Mammary epithelial cell (primary cell): ENCODE measurements at regions of chr9 and their contacts with region 1.

Region 1: DNA sequence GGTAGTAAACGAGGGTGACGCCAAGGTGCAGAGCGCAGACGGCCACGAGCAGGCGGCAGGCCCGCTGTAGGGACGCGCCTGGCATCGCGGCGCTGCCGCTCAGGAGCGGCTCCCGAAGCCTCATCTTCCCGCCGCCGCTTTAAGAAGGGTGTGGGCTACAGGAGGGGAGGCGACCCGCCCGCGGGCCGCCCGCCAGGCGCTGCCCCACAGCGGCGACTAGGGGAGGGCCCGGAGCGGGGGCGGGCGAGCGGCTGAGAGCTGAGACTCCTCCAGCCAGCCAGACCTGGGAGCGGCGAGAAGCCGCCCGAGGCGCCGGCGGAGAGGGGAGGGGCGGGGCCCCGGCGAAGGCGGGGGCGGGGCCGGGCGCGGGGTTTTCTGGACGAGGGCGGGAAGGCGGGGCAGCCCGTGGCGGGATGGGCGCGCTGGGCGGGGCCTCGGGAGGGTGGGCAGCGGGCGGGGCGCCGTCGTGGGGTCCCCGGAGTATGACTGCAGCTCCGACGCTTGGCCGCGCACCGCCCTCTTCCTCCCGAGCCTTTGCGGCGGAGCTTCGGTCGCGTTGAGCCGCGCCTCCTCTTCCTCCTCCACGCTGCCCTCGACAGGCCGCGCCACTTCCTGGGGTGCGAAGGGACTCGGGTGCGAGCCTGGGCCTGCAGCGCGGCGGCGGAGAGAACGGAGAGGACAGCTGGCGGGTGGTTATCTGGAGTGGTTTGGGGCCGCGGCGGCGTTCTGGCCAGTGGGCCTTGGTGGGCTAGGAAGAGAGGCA is at the start of gene B4GALT1:
- DNase-seq: peak; percentile 95
- H3K4me3 ChIP-seq: peak within 1 kb of the TSS; percentile 73 to 86 (median 81)
- H3K27ac ChIP-seq: peak within 1 kb of the TSS; percentile 96
- H3K4me1 ChIP-seq: peaks cover 49% of the 10 kb centered on the region
- H3K27me3 ChIP-seq: no peaks in the 10 kb centered on the region
- CTCF ChIP-seq: peak in 1 of 2 donors; percentile 13
- total RNA-seq, gene B4GALT1: 82.2 to 135 TPM

Region 2: DNA sequence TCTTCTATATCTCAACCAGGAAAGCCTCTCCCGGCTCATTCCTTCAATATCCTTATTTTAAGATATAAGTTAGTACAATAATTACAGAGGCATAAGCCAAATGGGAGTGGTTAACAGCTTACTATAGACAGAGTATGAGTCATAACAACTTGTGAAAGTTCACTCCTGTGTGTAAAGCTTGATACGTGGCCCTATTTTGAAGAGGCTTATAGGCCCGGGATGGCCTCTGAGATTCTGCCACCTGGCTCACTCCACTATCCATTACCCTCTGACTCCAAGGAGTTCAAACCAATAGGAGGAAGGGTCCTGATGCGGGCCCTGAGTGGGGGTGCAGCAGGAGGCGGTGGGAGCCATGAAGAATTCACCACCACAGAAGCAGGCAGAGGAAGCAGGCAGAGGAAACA is 36.7 kb before region 1 on chr9:
- CTCF ChIA-PET with region 1: no interaction called
- dilution Hi-C with region 1: loop called (anchors 5 kb)
- in situ Hi-C with region 1: no loop called
- intact Hi-C with region 1: loop called (anchors 5 kb)
- DNase-seq: peak; percentile 53
- H3K4me3 ChIP-seq: no peak overlapping the region
- H3K27ac ChIP-seq: peak overlapping the region; percentile 14
- H3K4me1 ChIP-seq: peaks cover 28% of the 10 kb centered on the region
- H3K27me3 ChIP-seq: no peaks in the 10 kb centered on the region
- CTCF ChIP-seq: no peak

Region 3: GRCh38 chr9:33180526-33181184 is 13.4 kb after region 1 on chr9:
- CTCF ChIA-PET with region 1: no interaction called
- dilution Hi-C with region 1: no loop called
- in situ Hi-C with region 1: no loop called
- intact Hi-C with region 1: loop called (anchors 2 kb)
- DNase-seq: peak; percentile 58
- H3K4me3 ChIP-seq: no peak overlapping the region
- H3K27ac ChIP-seq: peak overlapping the region; percentile 62
- H3K4me1 ChIP-seq: peaks cover 16% of the 10 kb centered on the region
- H3K27me3 ChIP-seq: no peaks in the 10 kb centered on the region
- CTCF ChIP-seq: no peak

Region 4: DNA sequence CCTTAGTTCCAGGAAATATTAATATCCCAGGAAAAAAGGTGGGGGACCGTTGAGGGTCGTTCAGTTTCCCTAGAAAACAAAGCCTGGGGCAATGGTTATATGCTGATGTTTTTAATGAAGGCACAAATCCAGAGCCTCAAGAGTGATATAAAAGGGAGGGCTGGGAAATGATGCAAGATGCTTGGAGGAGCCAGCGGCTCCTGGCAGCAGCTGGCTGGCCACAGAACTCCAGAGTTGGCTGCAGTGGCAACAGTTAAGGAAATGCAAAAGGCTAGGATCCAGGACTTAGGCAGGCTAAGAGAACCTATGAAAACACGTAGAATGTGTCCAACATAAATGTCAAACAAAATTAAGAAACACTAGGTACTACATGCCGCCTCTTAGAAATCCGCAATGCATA is 30.9 kb after region 1 on chr9:
- CTCF ChIA-PET with region 1: no interaction called
- dilution Hi-C with region 1: no loop called
- in situ Hi-C with region 1: no loop called
- intact Hi-C with region 1: no loop called
- DNase-seq: no peak
- H3K4me3 ChIP-seq: no peak overlapping the region
- H3K27ac ChIP-seq: no peak overlapping the region
- H3K4me1 ChIP-seq: peaks cover 5% of the 10 kb centered on the region
- H3K27me3 ChIP-seq: no peaks in the 10 kb centered on the region
- CTCF ChIP-seq: no peak

Region 5: GRCh38 chr9:33264473-33265177 is 97.4 kb after region 1 on chr9 and contains the starts of genes BAG1 and CHMP5:
- CTCF ChIA-PET with region 1: no interaction called
- dilution Hi-C with region 1: no loop called
- in situ Hi-C with region 1: no loop called
- intact Hi-C with region 1: loop called (anchors 1 kb)
- DNase-seq: peak; percentile 99
- H3K4me3 ChIP-seq: peak within 1 kb of the TSS; percentile 89 to 97 (median 96)
- H3K27ac ChIP-seq: peak within 1 kb of the TSS; percentile 87
- H3K4me1 ChIP-seq: peaks cover 17% of the 10 kb centered on the region
- H3K27me3 ChIP-seq: no peaks in the 10 kb centered on the region
- CTCF ChIP-seq: peak; percentile 11 to 45
- total RNA-seq, gene BAG1: 28.5 to 30.9 TPM
- total RNA-seq, gene CHMP5: 52.7 to 54.0 TPM